MCF 10A (cell line): ENCODE measurements at regions of chr5 and their contacts with region 1.

Region 1: DNA sequence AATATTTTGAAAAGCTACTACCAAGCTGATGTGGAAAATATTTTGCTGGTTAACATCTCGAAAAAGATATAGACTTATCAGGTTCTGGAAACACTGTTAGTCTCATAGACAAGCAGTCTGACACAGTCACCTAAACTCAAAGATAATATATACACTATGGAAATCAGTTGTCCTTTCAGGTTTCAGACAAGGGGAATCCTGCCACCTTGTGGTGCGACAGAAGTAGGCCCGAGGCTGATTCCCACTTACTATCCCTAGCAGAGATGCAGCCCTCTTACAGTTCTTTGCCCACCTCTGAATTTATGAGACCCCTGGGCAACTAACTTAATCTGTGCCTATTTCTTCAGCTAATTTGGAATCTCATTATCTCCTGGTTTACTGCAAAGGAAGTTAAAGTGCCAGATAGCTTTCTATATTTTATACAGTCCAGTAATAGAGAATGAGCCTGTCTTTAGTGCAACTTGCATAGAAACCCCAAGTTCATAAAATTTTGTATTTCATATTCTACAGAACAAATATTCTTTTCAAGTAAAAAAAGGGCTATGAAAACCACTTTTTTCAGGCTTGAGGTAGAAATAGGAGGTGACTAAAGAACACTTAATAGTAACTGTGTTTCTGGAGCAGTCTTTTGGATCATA is 16.9 kb downstream of the RAD1 start:
- DNase-seq: peak; percentile 73
- H3K4me3 Mint-ChIP-seq: no peak overlapping the region
- H3K27ac Mint-ChIP-seq: no peak overlapping the region
- H3K4me1 Mint-ChIP-seq: peaks cover 10% of the 10 kb centered on the region
- H3K27me3 Mint-ChIP-seq: no peaks in the 10 kb centered on the region
- CTCF ChIP-seq: peak; percentile 80

Region 2: DNA sequence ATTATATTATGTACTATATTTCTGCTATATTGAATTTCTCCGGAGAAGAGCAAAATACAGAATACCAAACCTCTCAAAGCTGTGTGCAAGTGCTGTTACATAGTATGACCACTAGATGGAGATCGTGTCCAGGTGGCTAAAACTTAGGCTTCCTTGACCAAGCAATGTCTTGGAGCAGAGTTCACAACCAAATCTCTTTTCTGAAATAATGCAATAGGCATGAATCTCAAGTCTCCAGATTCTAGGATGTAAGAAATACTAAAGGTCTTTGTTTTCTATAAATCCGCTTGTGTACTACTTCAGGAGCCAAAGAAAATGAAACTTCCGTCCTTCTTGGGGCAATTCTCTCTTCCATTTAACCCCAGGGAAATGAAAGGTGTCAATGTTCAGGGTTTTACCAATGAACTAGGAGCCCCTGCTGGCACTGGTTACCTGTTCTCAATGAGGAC is 423.8 kb before region 1 on chr5:
- CTCF ChIA-PET with region 1: interaction called, 468 read pairs
- POLR2A ChIA-PET with region 1: interaction called, 4 read pairs
- intact Hi-C with region 1: loop called (anchors 1 kb)
- DNase-seq: peak; percentile 67
- H3K4me3 Mint-ChIP-seq: no peak overlapping the region
- H3K27ac Mint-ChIP-seq: no peak overlapping the region
- H3K4me1 Mint-ChIP-seq: no peaks in the 10 kb centered on the region
- H3K27me3 Mint-ChIP-seq: peaks cover 16% of the 10 kb centered on the region
- CTCF ChIP-seq: peak; percentile 90

Region 3: GRCh38 chr5:34499001-34499734 is 399.2 kb before region 1 on chr5:
- CTCF ChIA-PET with region 1: interaction called, 468 read pairs
- POLR2A ChIA-PET with region 1: no interaction called
- intact Hi-C with region 1: no loop called
- DNase-seq: peak; percentile 80
- H3K4me3 Mint-ChIP-seq: no peak overlapping the region
- H3K27ac Mint-ChIP-seq: peak overlapping the region; percentile 35
- H3K4me1 Mint-ChIP-seq: peaks cover 19% of the 10 kb centered on the region
- H3K27me3 Mint-ChIP-seq: no peaks in the 10 kb centered on the region
- CTCF ChIP-seq: no peak

Region 4: DNA sequence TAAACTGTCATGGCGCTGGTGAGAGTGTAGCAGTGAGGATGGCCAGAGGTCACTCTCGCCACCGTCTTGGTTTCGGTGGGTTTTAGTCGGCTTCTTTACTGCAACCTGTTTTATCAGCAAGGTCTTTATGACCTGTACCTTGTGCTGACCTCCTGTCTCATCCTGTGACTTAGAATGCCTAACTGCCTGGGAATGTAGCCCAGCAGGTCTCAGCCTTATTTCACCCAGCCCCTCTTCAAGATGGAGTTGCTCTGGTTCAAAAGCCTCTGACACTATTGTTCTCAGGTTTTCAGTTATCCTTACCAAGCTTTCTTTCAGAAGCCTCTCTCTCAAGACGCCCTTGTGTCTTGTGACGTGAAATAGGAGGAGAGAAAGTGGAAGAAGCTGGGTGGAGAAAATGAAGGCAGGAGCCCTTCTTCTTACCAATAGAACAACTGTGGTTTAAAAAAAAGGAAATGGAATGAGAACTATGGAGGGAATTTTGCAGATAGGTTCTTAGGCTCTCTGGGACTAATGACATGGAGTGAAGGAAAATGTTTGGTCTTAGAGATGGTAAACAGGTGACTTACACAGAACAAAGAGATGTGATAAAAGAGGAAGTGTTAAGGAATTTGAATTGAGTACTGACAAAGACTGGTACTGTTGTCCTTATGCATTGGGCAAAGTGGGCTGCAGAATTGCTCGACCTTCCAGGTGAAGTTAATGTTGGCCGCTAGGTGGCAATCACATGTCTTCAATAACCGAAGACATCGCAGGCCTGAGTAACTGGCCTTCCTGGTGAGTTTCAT is 375.6 kb before region 1 on chr5:
- CTCF ChIA-PET with region 1: interaction called, 126 read pairs
- POLR2A ChIA-PET with region 1: interaction called, 7 read pairs
- intact Hi-C with region 1: loop called (anchors 1 kb)
- DNase-seq: peak; percentile 85
- H3K4me3 Mint-ChIP-seq: no peak overlapping the region
- H3K27ac Mint-ChIP-seq: no peak overlapping the region
- H3K4me1 Mint-ChIP-seq: peaks cover 20% of the 10 kb centered on the region
- H3K27me3 Mint-ChIP-seq: no peaks in the 10 kb centered on the region
- CTCF ChIP-seq: peak; percentile 65

Region 5: DNA sequence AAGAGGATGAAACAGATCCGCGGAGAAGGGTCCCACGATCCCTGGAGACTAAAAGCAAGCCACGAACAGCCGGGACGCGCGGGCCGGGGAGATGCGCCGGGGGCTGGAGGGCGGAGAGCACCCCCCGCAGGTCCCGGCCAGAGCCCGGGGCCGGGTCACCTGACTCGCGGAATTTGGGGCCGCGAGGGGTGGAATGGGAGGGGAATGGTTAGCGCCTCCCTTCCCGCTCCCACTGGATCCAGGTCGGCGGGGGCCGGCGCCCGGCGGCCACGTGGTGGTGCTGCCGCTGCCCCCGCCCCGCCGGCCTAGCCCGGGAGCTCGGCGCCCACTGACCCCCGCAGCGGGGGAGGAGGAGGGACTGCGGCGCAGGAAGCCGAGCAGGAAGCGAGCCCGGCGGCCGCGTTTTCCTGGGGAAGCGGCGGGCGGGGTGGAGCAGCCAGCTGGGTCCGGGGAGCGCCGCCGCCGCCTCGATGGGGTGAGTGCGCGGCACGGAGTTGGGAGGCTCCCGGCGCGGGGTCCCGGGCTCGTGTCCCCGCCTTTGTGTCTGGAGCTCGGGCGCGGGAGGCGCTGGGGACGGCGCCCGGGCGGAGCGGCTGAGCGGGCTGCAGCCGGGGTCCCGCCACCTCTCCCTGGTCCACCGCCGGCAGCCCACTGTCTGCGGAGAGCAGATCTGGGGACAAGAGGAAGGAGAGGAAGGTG is 242.2 kb before region 1 on chr5 and contains the start of gene RAI14:
- CTCF ChIA-PET with region 1: interaction called, 10 read pairs
- POLR2A ChIA-PET with region 1: no interaction called
- intact Hi-C with region 1: loop called (anchors 2 kb)
- DNase-seq: peak; percentile 74
- H3K4me3 Mint-ChIP-seq: peak within 1 kb of the TSS; percentile 73
- H3K27ac Mint-ChIP-seq: peak within 1 kb of the TSS; percentile 92
- H3K4me1 Mint-ChIP-seq: peaks cover 15% of the 10 kb centered on the region
- H3K27me3 Mint-ChIP-seq: no peaks in the 10 kb centered on the region
- CTCF ChIP-seq: no peak
- total RNA-seq, gene RAI14: 47.6 and 47.9 TPM in 2 replicates

Region 6: DNA sequence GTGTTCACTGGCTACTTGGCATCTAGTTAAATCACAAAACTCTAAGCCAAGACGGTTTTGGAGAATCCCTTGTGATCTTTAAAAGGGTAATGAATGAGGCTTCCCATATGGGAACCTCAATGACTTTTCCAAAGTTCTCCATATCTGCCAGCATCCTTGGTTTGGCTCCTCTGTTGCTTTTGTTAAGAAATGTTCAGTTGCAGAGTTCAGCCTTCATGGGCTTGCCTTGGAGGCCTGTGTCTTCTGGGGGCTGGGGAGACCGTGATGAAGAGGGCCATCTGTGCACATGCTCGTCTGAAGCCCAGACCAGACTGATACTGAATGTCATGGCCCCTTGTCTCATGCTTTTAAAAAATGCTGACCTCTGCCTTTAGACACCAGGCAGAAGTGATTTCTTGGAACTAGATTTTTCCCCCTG is 158.0 kb before region 1 on chr5:
- CTCF ChIA-PET with region 1: no interaction called
- POLR2A ChIA-PET with region 1: no interaction called
- intact Hi-C with region 1: no loop called
- DNase-seq: no peak
- H3K4me3 Mint-ChIP-seq: no peak overlapping the region
- H3K27ac Mint-ChIP-seq: no peak overlapping the region
- H3K4me1 Mint-ChIP-seq: peaks cover 24% of the 10 kb centered on the region
- H3K27me3 Mint-ChIP-seq: no peaks in the 10 kb centered on the region
- CTCF ChIP-seq: no peak

Region 7: DNA sequence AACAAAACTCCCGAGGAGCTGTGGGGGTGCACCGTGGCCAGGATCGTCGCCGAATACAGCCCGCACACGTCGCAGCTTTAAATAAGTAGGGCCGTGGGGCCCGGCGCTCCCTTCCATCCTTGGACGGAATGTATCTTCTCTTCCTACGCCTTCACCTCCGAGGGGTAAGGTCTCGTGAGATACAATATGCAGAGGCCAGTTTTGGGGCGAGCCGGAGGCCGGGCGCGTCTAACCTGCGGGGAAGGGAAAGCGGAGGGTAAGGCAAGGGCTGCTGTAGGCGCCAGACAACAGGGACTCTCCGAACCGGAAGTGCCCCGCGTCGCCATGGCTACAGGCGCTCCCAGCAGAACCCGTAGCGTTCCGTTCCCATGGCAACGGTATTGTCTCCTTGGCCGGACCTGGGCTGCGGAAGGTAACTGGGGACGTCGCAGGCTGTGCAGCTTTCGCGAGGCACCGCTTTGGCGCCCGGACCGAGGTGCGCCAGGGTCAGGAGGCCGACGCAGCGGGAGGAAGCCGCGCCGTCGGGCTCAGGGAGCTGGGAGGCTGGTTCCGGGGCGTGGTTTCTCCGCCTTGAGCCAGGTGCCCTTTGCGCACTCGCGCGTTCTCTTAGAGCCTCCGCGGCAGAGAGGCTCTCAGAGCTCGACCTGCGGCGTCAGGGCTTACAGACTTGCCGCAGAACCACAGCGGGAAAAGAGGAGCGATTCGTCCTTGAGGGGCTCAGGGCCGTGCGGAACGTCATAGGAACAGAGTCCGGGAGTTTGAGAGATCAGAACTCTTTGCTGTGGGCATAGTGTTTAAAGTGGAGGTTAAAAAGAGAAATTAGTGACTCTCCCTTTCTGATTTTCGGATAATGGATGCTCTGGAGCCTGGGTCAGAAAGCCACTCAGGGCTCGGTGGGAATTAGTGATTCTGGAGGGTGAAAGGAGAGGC is 59.3 kb before region 1 on chr5 and contains the start of gene TTC23L:
- CTCF ChIA-PET with region 1: interaction called, 14 read pairs
- POLR2A ChIA-PET with region 1: interaction called, 6 read pairs
- intact Hi-C with region 1: loop called (anchors 5 kb)
- DNase-seq: peak; percentile 89
- H3K4me3 Mint-ChIP-seq: peak within 1 kb of the TSS; percentile 88
- H3K27ac Mint-ChIP-seq: peak within 1 kb of the TSS; percentile 92
- H3K4me1 Mint-ChIP-seq: peaks cover 11% of the 10 kb centered on the region
- H3K27me3 Mint-ChIP-seq: no peaks in the 10 kb centered on the region
- CTCF ChIP-seq: no peak
- total RNA-seq, gene TTC23L: 0.14 and 0.69 TPM in 2 replicates

Region 8: GRCh38 chr5:34915139-34915855 is 16.9 kb after region 1 on chr5 and contains the starts of genes BRIX1 and RAD1:
- CTCF ChIA-PET with region 1: interaction called, 23 read pairs
- POLR2A ChIA-PET with region 1: interaction called, 27 read pairs
- intact Hi-C with region 1: no loop called
- DNase-seq: peak; percentile 97
- H3K4me3 Mint-ChIP-seq: no peak within 1 kb of the TSS
- H3K27ac Mint-ChIP-seq: no peak within 1 kb of the TSS
- H3K4me1 Mint-ChIP-seq: peaks cover 12% of the 10 kb centered on the region
- H3K27me3 Mint-ChIP-seq: no peaks in the 10 kb centered on the region
- CTCF ChIP-seq: no peak
- total RNA-seq, gene BRIX1: 36.0 and 50.8 TPM in 2 replicates
- total RNA-seq, gene RAD1: 16.7 and 17.2 TPM in 2 replicates

Region 9: DNA sequence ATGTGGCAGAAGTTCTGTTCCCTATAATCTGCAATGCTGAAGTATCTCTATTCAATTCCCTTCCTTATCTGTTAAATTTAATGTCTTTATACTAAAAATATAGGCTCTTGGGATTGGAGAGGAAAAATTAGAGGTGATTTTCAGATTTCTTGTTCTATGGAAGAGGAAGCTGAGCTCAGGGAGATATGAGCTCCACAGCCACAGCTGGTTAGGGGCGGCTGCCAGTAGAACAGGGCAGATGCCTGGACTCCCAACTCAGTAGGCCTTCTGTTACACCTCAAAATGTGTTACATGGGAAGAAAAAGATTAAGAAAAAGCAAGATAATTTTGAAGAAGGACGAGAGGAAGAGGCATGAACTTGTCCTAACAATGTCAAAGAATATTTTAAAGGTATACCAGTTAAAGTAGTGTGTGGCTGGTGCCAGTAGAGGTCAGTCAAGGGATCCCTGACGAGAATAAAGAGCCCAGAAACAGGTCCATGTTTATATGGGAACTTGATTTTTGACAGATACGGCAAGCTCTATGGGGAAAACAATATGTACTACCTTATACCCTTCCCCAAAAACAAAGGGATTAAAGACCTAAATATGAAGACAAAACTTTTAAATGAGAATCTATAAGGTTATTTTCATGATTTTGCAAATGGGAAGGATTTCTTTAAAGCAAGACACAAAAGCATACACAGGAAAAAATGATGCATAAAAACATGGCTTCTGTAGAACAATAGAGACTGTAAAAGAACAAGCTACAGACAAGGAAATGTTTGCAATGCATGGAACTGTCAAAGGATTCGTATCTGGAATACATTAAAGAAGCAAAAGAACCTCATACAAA is 59.7 kb after region 1 on chr5:
- CTCF ChIA-PET with region 1: no interaction called
- POLR2A ChIA-PET with region 1: no interaction called
- intact Hi-C with region 1: no loop called
- DNase-seq: peak; percentile 48
- H3K4me3 Mint-ChIP-seq: no peak overlapping the region
- H3K27ac Mint-ChIP-seq: no peak overlapping the region
- H3K4me1 Mint-ChIP-seq: peaks cover 7% of the 10 kb centered on the region
- H3K27me3 Mint-ChIP-seq: no peaks in the 10 kb centered on the region
- CTCF ChIP-seq: peak; percentile 33

Region 10: GRCh38 chr5:35089334-35090314 is 191.2 kb after region 1 on chr5:
- CTCF ChIA-PET with region 1: no interaction called
- POLR2A ChIA-PET with region 1: no interaction called
- intact Hi-C with region 1: no loop called
- DNase-seq: peak; percentile 77
- H3K4me3 Mint-ChIP-seq: no peak overlapping the region
- H3K27ac Mint-ChIP-seq: no peak overlapping the region
- H3K4me1 Mint-ChIP-seq: no peaks in the 10 kb centered on the region
- H3K27me3 Mint-ChIP-seq: no peaks in the 10 kb centered on the region
- CTCF ChIP-seq: peak; percentile 86